Panc1 (cell line): ENCODE measurements at regions of chr6 and their contacts with region 1.

Region 1: GRCh38 chr6:36623547-36624459 is 29.6 kb downstream of the SRSF3 start:
- DNase-seq: peak; percentile 64
- ATAC-seq: peak; percentile 77
- H3K4me3 ChIP-seq: no peak overlapping the region
- H3K27ac ChIP-seq: peak overlapping the region; percentile 57; the same call in 1 of the 2 replicates
- H3K4me1 ChIP-seq: peaks cover 9% of the 10 kb centered on the region
- H3K27me3 ChIP-seq: no peaks in the 10 kb centered on the region
- CTCF ChIP-seq: peak; percentile 89

Region 2: GRCh38 chr6:36368921-36369865 is 254.6 kb before region 1 on chr6:
- CTCF ChIA-PET with region 1: no interaction called
- POLR2A ChIA-PET with region 1: no interaction called
- in situ Hi-C with region 1: no loop called
- intact Hi-C with region 1: no loop called
- DNase-seq: no peak
- ATAC-seq: no peak
- H3K4me3 ChIP-seq: no peak overlapping the region
- H3K27ac ChIP-seq: no peak overlapping the region
- H3K4me1 ChIP-seq: 0 out of 2 replicates have a peak, but pooled peaks cover 4% of the 10 kb centered on the region
- H3K27me3 ChIP-seq: no peaks in the 10 kb centered on the region
- CTCF ChIP-seq: no peak

Region 3: GRCh38 chr6:36399970-36400369 is 223.8 kb before region 1 on chr6:
- CTCF ChIA-PET with region 1: no interaction called
- POLR2A ChIA-PET with region 1: no interaction called
- in situ Hi-C with region 1: no loop called
- intact Hi-C with region 1: no loop called
- DNase-seq: no peak
- ATAC-seq: no peak
- H3K4me3 ChIP-seq: no peak overlapping the region
- H3K27ac ChIP-seq: no peak overlapping the region
- H3K4me1 ChIP-seq: no peaks in the 10 kb centered on the region
- H3K27me3 ChIP-seq: no peaks in the 10 kb centered on the region
- CTCF ChIP-seq: no peak

Region 4: DNA sequence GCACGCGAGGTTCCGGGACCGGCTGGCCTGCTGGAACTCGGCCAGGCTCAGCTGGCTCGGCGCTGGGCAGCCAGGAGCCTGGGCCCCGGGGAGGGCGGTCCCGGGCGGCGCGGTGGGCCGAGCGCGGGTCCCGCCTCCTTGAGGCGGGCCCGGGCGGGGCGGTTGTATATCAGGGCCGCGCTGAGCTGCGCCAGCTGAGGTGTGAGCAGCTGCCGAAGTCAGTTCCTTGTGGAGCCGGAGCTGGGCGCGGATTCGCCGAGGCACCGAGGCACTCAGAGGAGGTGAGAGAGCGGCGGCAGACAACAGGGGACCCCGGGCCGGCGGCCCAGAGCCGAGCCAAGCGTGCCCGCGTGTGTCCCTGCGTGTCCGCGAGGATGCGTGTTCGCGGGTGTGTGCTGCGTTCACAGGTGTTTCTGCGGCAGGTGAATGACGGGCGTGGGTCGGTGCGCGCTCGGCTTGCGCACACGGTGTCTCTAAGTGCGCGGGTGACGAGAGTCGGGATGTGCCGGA is 54.8 kb after region 1 on chr6 and contains the start of gene CDKN1A:
- CTCF ChIA-PET with region 1: no interaction called
- POLR2A ChIA-PET with region 1: no interaction called
- in situ Hi-C with region 1: no loop called
- intact Hi-C with region 1: loop called (anchors 2 kb)
- DNase-seq: no peak
- ATAC-seq: peak; percentile 88
- H3K4me3 ChIP-seq: peak within 1 kb of the TSS; percentile 77 to 89
- H3K27ac ChIP-seq: peak within 1 kb of the TSS; percentile 75
- H3K4me1 ChIP-seq: peaks cover 38% of the 10 kb centered on the region
- H3K27me3 ChIP-seq: no peaks in the 10 kb centered on the region
- CTCF ChIP-seq: no peak
- total RNA-seq, gene CDKN1A: 46.2 TPM

Region 5: DNA sequence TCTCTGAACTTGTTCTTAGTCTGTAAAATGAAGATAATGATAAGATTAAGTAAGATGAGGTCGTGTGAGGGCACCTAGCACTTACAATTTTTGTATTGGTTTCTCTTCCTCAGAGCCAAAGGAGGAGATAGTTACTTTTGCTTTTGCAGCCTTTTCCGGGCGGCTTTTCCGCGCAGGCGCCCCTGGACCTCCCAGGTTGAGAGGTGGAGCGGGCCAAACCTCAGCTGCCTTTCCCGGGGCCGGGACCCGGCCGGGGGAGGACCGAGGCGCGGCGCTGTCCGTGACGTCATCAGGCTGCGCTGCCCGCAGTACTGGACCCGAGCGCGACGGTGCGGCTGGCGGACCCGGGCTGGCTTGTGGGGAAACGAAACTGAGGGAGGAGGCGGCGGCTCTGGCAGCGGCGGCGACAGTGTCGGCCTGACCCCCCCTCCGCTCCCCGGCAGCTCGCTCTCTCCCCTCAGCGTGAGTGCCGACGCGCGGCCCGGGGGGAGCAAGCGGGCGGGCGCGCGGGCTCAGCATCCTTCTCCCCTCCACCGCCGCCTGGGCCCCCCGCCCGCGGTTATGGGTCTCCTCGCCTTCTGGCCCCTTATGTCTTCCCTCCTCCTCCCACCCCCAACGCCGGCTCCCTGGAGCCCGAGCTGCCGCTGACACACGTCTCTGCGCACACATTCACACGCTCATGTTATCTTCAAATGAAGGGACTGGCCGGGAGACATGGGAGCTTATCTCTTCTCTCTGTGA is 809.3 kb after region 1 on chr6 and contains the start of gene CMTR1:
- CTCF ChIA-PET with region 1: no interaction called
- POLR2A ChIA-PET with region 1: interaction called, 16 read pairs
- in situ Hi-C with region 1: no loop called
- intact Hi-C with region 1: no loop called
- DNase-seq: peak; percentile 30
- ATAC-seq: peak; percentile 99
- H3K4me3 ChIP-seq: peak within 1 kb of the TSS; percentile 90 to 97
- H3K27ac ChIP-seq: peak within 1 kb of the TSS; percentile 96
- H3K4me1 ChIP-seq: peaks cover 10% of the 10 kb centered on the region
- H3K27me3 ChIP-seq: no peaks in the 10 kb centered on the region
- CTCF ChIP-seq: no peak
- total RNA-seq, gene CMTR1: 37.7 TPM

Region 6: DNA sequence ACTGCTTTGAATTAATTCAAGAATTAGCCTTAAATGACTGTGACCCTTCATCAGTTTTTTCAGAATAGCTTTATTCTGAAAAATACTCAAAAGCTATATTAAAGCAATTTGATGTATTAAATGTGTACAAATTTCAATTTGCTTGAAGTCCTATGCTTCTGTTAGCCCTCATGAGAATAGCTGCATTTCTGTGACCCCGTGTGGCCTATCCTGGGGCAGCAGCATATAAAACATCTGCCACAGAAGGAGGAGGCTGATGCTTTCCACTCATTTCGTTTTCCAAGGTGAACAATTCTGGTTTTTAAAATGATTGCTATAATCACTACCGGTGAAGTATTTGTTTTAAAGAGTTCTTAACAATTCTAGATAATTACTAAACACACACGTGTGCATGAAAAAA is 1655.6 kb after region 1 on chr6:
- CTCF ChIA-PET with region 1: no interaction called
- POLR2A ChIA-PET with region 1: no interaction called
- in situ Hi-C with region 1: no loop called
- intact Hi-C with region 1: no loop called
- DNase-seq: no peak
- ATAC-seq: no peak
- H3K4me3 ChIP-seq: no peak overlapping the region
- H3K27ac ChIP-seq: no peak overlapping the region
- H3K4me1 ChIP-seq: no peaks in the 10 kb centered on the region; the same call in 1 of the 2 replicates
- H3K27me3 ChIP-seq: no peaks in the 10 kb centered on the region
- CTCF ChIP-seq: peak; percentile 34